CD4-positive, alpha-beta T cell (primary cell): ENCODE measurements at regions of chr17 and their contacts with region 1.

Region 1: DNA sequence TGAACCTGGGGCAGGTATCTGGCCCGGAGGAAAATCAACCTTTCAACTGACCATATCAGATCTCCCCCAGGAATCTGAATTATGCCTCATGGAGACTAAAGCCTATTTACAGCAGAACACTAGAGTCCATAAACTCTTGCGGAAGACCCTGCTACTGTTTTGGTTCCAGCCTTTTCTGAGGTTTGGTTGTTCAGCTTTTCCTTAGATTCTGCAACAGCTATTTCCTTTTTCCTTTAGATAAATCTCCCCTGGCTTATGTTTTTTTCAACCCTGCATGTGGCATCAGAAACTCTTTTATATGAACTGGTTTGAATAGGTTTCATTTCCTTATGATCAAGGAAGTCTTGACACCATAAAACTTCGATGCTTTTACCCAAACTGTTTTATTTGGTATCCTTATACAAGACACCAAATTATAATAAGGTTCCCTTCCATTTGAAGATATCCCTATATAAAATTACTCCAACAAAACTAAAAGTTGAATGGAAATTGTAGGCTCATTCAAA is 13.1 kb downstream of the SPOP start:
- DNase-seq: no peak
- ATAC-seq: no peak
- H3K4me3 ChIP-seq: no peak overlapping the region
- H3K4me3 Mint-ChIP-seq: no peak overlapping the region
- H3K27ac ChIP-seq: no peak overlapping the region
- H3K27ac Mint-ChIP-seq: peak overlapping the region; percentile 71
- H3K4me1 ChIP-seq: peaks cover 14% of the 10 kb centered on the region
- H3K4me1 Mint-ChIP-seq: peaks cover 52% of the 10 kb centered on the region
- H3K27me3 ChIP-seq: no peaks in the 10 kb centered on the region
- H3K27me3 Mint-ChIP-seq: no peaks in the 10 kb centered on the region
- CTCF ChIP-seq: no peak

Region 2: DNA sequence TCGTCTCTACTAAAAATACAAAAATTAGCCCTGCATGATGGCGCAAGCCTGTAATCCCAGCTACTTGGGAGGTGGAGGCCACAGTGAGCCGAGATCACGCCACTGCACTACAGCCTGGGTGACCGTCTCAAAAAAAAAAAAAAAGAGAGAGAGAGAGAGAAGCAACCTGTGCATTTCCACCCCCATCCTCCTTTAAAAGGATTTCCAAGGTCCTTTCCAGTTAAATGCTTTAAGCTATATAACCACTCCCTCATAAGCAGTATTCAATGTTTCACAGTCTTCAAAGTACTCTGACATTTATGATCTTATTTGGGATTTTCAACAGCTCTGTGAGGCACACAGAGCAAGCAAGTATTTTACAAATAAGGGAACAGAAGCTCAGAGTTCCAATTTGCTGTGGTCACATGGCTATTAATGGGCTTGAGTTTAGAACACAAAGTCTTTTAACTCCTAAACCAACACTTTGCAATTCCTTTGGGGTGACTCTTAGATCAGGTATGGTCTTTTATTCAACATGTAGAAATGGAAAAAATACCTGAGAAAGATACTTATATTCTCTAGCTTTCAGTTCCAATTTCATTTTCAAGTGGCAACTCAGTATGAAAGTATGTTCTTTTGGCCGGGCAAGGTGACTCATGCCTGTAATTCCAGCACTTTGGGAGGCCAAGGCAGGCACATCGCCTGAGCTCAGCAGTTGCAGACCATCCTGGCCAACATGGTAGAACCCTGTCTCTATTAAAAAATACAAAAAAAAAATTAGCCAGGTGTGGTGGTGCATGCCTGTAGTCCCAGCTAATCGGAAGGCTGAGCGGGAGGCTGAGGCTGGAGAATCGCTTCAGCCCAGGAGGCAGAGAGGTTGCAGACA is 18.1 kb before region 1 on chr17:
- CTCF ChIA-PET with region 1: no interaction called
- POLR2A ChIA-PET with region 1: interaction called, 4 read pairs
- intact Hi-C with region 1: loop called in 1 of 2 experiments (anchors 2 kb)
- DNase-seq: peak in 2 of 14 experiments; percentile 1 to 10
- ATAC-seq: no peak
- H3K4me3 ChIP-seq: no peak overlapping the region
- H3K4me3 Mint-ChIP-seq: no peak overlapping the region
- H3K27ac ChIP-seq: no peak overlapping the region
- H3K27ac Mint-ChIP-seq: peak overlapping the region; percentile 37
- H3K4me1 ChIP-seq: peaks cover 9% of the 10 kb centered on the region
- H3K4me1 Mint-ChIP-seq: peaks cover 52% of the 10 kb centered on the region
- H3K27me3 ChIP-seq: no peaks in the 10 kb centered on the region
- H3K27me3 Mint-ChIP-seq: no peaks in the 10 kb centered on the region
- CTCF ChIP-seq: no peak